Right cardiac atrium (tissue), 5 donors: ENCODE measurements at regions of chr3 and their contacts with region 1.

Region 1: DNA sequence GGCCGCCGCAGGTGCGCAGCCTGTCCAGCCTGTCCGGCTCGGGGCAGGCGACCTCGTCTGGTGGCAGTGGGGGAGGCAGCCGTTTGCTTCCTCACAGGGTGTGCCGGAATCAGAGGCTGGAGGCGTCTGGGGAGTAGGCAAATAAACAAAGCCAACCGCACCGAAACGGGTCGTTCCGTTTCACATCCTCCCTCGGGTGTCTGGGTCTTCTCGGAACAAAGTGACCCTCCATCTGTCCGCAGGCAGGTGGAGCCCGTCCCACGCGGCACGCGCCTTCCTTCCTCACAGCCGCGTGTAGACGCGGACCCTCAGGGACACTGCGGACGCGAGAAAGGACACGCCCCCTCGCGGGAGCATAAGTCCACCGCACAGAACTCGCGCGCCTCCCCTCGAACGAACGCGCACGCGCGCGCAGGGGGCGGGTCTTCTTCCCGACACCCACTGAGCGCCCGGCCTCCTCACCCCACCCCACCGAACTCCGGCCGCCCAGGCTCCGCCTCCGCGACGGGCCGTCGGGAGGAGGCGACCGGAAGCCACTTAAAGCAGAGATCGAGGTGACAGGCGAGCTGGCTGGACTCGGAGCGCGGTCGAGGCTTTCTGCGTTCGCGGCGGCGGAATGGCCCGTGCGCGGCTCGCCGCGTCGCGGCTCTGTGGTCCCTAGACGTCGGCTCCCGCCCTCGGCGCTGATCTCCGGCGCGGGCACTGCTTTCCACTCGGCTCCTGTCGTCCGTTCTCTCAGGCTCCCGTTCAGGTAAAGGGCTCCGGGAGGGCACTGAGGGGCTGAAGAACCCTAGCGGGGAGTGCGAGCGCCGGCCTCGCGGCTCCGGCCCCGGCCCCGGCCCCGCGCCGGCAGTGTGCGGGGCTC is at the start of gene TIPARP:
- DNase-seq: peak; percentile 99 to 100 (median 100)
- ATAC-seq: peak; percentile 97
- H3K4me3 ChIP-seq: peak within 1 kb of the TSS; percentile 68
- H3K27ac ChIP-seq: peak within 1 kb of the TSS; percentile 90
- H3K4me1 ChIP-seq: peaks cover 5% of the 10 kb centered on the region
- H3K27me3 ChIP-seq: no peaks in the 10 kb centered on the region
- total RNA-seq, gene TIPARP: 32.8 to 51.3 (median 41.2) TPM

Region 2: GRCh38 chr3:156120528-156121251 is 553.6 kb before region 1 on chr3 and contains the start of gene KCNAB1:
- intact Hi-C with region 1: no loop called
- DNase-seq: peak in 1 of 3 donors; percentile 39
- ATAC-seq: no peak
- H3K4me3 ChIP-seq: no peak within 1 kb of the TSS
- H3K27ac ChIP-seq: no peak within 1 kb of the TSS
- H3K4me1 ChIP-seq: no peaks in the 10 kb centered on the region
- H3K27me3 ChIP-seq: no peaks in the 10 kb centered on the region
- total RNA-seq, gene KCNAB1: 1.1 to 3.7 (median 2.2) TPM

Region 3: GRCh38 chr3:156547637-156548036 is 126.6 kb before region 1 on chr3:
- intact Hi-C with region 1: loop called in 3 of 4 experiments (anchors 5 to 10 kb)
- DNase-seq: no peak
- ATAC-seq: peak; percentile 43 to 51
- H3K4me3 ChIP-seq: peak overlapping the region; percentile 5
- H3K27ac ChIP-seq: no peak overlapping the region
- H3K4me1 ChIP-seq: peaks cover 9% of the 10 kb centered on the region
- H3K27me3 ChIP-seq: no peaks in the 10 kb centered on the region

Region 4: DNA sequence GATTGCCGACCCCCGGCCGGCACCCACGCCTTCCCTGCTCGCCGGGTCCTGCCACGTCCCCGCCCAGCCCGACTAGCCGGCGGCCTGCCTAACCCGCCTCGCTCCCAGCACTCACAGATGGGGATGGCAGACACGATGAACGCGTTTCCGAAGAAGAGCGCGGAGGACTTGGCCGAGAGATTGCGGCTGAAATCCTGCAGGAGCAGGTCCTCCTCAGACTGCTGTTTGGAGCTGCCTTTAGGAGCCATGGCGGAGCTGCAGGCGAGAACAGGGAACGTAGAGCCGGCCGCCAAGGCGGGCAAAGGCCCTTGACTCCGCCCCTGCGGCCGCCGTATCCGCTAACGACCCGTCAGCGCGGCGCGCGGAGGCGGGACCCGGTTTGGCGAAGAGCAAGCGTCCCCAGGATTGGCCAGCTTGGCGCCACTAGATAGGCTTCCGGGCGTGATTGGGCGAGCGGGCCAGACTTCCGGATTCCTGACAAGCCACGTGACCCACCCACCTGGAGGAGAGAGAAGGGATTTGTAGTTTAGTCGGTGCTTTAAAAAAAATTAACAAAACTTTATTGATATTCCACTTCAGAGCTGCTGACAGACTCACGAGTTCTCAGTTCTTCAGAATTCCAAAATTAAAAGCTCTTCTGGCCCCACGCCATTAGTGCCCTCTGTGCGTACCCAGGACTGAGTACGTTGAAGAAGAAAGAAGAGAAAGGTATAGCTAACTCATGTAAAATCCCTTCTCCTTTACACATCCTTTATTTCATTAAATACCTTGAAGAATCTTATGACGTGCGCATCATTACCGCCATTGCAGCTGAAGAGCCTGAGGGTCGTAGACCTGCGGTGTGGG is 119.2 kb before region 1 on chr3 and contains the start of gene SSR3:
- intact Hi-C with region 1: loop called in 2 of 4 experiments (anchors 10 kb)
- DNase-seq: peak; percentile 100
- ATAC-seq: peak; percentile 100
- H3K4me3 ChIP-seq: peak within 1 kb of the TSS; percentile 77
- H3K27ac ChIP-seq: peak within 1 kb of the TSS; percentile 96
- H3K4me1 ChIP-seq: peaks cover 3% of the 10 kb centered on the region
- H3K27me3 ChIP-seq: no peaks in the 10 kb centered on the region
- total RNA-seq, gene SSR3: 139 to 171 (median 144) TPM

Region 5: GRCh38 chr3:156826144-156826895 is 152.0 kb after region 1 on chr3 and contains the start of gene LEKR1:
- intact Hi-C with region 1: loop called in 2 of 4 experiments (anchors 5 to 10 kb)
- DNase-seq: peak; percentile 93 to 96 (median 95)
- ATAC-seq: peak; percentile 98 to 99
- H3K4me3 ChIP-seq: peak within 1 kb of the TSS; percentile 66
- H3K27ac ChIP-seq: peak within 1 kb of the TSS; percentile 88
- H3K4me1 ChIP-seq: no peaks in the 10 kb centered on the region
- H3K27me3 ChIP-seq: no peaks in the 10 kb centered on the region
- total RNA-seq, gene LEKR1: 0.97 to 2.0 (median 1.6) TPM

Region 6: GRCh38 chr3:157046520-157046919 is 372.2 kb after region 1 on chr3:
- intact Hi-C with region 1: no loop called
- DNase-seq: no peak
- ATAC-seq: no peak
- H3K4me3 ChIP-seq: no peak overlapping the region
- H3K27ac ChIP-seq: no peak overlapping the region
- H3K4me1 ChIP-seq: peaks cover 3% of the 10 kb centered on the region
- H3K27me3 ChIP-seq: no peaks in the 10 kb centered on the region

Region 7: GRCh38 chr3:157081681-157082210 is 407.5 kb after region 1 on chr3:
- intact Hi-C with region 1: loop called in 3 of 4 experiments (anchors 2 to 10 kb)
- DNase-seq: peak; percentile 92 to 97 (median 96)
- ATAC-seq: peak; percentile 85 to 94
- H3K4me3 ChIP-seq: no peak overlapping the region
- H3K27ac ChIP-seq: peak overlapping the region; percentile 60
- H3K4me1 ChIP-seq: peaks cover 3% of the 10 kb centered on the region
- H3K27me3 ChIP-seq: no peaks in the 10 kb centered on the region

Region 8: DNA sequence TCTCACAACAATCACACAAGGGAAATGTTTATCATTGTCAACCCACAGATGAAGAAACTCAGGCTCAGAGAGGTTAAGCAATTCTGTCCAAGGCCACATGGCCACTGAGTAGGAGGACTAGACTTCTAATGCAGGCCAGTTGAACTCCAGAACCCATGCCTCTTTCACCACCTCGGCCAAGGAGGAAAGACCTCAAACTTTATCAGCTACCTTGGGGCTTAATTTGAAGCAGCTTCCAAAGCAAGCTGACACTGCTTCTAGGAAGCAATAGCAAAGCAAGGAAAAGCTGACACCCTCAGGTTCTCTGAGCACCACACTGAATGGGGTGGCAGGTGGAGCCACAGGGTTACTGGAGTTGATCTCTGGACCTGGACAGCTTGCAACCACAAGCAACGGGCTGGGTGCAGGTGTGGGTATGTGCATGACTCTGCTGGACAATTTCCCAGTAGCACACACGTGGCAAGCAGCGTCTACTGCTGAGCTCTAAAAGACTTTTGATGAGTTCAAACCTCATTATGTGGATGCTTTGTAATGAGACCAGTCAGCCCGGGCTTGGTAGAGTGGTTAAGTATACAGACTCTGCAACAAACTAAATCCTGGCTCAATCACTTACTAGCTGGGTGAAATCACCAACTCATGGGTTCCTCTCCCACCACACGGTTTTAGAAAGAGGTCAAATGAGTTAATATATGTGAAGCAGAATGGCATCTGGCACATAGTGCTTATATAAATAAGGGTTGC is 462.5 kb after region 1 on chr3:
- intact Hi-C with region 1: loop called (anchors 5 to 10 kb)
- DNase-seq: peak in 2 of 3 donors; percentile 44 to 67
- ATAC-seq: peak; percentile 20 to 23
- H3K4me3 ChIP-seq: no peak overlapping the region
- H3K27ac ChIP-seq: peak overlapping the region; percentile 33
- H3K4me1 ChIP-seq: peaks cover 21% of the 10 kb centered on the region
- H3K27me3 ChIP-seq: no peaks in the 10 kb centered on the region